ENCODE measurements at regions of chr10 and their contacts with region 1.

Region 1: GRCh38 chr10:60820093-60820754 is 41.9 kb downstream of the CDK1 start:
- DNase-seq: no peak
- H3K4me3 ChIP-seq: no peak overlapping the region
- H3K27ac ChIP-seq: no peak overlapping the region
- H3K4me1 ChIP-seq: peaks cover 0 to 3% (median 0%) of the 10 kb centered on the region in 4 experiments; a peak in 1 of 7 replicates
- H3K27me3 ChIP-seq: no peaks in the 10 kb centered on the region
- CTCF ChIP-seq: peak in 2 of 3 experiments; percentile 31 to 51; a peak in 3 of 4 replicates
- EP300 ChIP-seq: no peak
- POLR2A ChIP-seq: no peak
- RAD21 ChIP-seq: peak; percentile 43 to 53

Region 2: DNA sequence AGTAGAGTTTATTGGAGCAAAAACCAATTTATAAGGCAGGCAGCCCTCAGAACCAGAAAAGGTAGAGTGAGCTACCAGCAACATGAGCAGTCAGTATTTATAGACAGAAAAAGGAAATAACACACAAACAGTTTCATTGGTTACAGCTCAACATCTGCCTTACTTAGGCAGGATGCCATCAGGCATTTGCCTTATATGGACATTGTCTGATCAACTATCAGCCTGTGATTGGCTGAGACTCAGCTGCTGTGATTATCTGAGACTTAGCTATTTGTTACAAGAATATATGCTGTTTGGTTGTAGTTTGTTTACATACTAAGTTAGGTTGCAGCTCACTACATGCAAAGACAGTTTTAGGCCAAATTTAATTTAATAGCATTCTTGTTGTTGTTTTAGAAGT is 102.4 kb before region 1 on chr10:
- CTCF ChIA-PET with region 1: no interaction called
- POLR2A ChIA-PET with region 1: no interaction called
- DNase-seq: no peak
- H3K4me3 ChIP-seq: no peak overlapping the region
- H3K27ac ChIP-seq: no peak overlapping the region
- H3K4me1 ChIP-seq: no peaks in the 10 kb centered on the region
- H3K27me3 ChIP-seq: no peaks in the 10 kb centered on the region
- CTCF ChIP-seq: no peak
- EP300 ChIP-seq: no peak
- POLR2A ChIP-seq: no peak
- RAD21 ChIP-seq: no peak

Region 3: DNA sequence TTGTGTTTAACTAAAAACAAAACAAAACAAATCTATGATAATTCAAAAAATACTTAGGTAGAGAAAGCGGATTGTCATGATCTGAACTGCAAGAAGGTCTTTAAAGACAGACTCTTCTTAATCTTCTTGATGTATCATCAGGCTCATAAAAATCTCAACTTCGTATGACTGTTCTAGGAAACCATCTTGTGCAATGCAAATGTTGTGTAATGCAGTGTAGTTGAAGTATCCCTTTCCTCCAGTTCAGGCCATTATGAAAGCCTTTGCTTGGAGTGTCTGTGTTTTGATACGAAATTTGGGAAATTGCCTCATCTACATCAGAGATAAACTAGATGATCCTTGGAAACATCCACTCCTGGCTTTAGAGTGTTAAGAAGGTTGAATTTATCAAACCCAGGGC is 11.1 kb before region 1 on chr10:
- CTCF ChIA-PET with region 1: interaction called, 14 read pairs
- POLR2A ChIA-PET with region 1: no interaction called
- DNase-seq: no peak
- H3K4me3 ChIP-seq: no peak overlapping the region
- H3K27ac ChIP-seq: no peak overlapping the region
- H3K4me1 ChIP-seq: no peaks in the 10 kb centered on the region
- H3K27me3 ChIP-seq: no peaks in the 10 kb centered on the region
- CTCF ChIP-seq: no peak
- EP300 ChIP-seq: no peak
- POLR2A ChIP-seq: no peak
- RAD21 ChIP-seq: no peak

Region 4: GRCh38 chr10:60962946-60963345 is 142.7 kb after region 1 on chr10:
- CTCF ChIA-PET with region 1: interaction called, 22 read pairs
- POLR2A ChIA-PET with region 1: no interaction called
- DNase-seq: no peak
- H3K4me3 ChIP-seq: no peak overlapping the region
- H3K27ac ChIP-seq: no peak overlapping the region
- H3K4me1 ChIP-seq: no peaks in the 10 kb centered on the region
- H3K27me3 ChIP-seq: no peaks in the 10 kb centered on the region
- CTCF ChIP-seq: no peak
- EP300 ChIP-seq: no peak
- POLR2A ChIP-seq: no peak
- RAD21 ChIP-seq: no peak

Measured in H1 (cell line).